ENCODE measurements at regions of chr15 and their contacts with region 1.

Region 1: DNA sequence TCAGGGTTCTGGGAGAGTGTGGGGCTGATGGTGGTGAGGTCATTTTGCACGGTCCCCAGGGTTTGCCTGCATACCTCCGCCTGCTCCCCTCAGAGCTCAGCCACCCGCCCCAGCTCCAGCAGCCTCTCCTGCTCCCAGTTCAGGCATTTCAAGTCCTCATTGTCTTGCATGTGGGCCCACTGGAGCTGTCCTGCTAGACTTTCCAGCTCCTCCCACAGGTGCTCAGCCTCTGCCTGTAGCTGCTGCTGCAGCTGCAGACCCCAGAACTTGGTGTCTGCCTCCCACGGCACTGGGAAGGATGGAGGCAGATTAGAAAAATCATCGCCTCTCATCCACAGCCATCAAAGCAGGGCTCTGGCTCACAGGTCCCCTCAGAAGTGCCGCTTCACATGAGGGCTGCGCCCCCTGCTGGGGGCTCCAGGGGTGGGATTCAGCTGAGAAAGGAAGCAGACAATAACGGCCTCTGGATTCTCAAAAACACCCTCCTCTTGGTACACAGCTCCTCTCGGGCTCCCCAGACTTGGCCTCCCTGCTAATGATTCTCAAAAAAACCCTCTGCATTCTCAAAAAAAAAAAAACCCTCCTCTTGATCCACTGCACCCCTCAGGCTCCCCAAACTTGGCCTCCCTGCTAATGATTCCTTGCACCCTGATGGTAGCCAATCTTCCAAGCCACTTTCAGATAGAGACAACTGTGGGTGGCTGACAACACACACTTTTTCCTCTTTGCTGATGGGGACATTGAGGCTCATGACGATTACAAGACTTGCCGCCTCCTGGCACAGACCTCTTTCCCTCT is 89.3 kb upstream of the C2CD4B start:
- DNase-seq: peak; percentile 43
- ATAC-seq: peak; percentile 81
- H3K4me3 ChIP-seq: no peak overlapping the region
- H3K27ac ChIP-seq: no peak overlapping the region
- H3K4me1 ChIP-seq: no peaks in the 10 kb centered on the region
- H3K27me3 ChIP-seq: peaks cover 22% of the 10 kb centered on the region
- CTCF ChIP-seq: peak; percentile 62
- POLR2A ChIP-seq: no peak
- RAD21 ChIP-seq: peak; percentile 56

Region 2: GRCh38 chr15:62060113-62060895 is 194.0 kb before region 1 on chr15 and contains the start of gene VPS13C:
- CTCF ChIA-PET with region 1: no interaction called
- POLR2A ChIA-PET with region 1: no interaction called
- dilution Hi-C with region 1: no loop called
- in situ Hi-C with region 1: no loop called
- intact Hi-C with region 1: loop called (anchors 10 kb)
- DNase-seq: peak; percentile 90
- ATAC-seq: peak; percentile 96
- H3K4me3 ChIP-seq: peak within 1 kb of the TSS; percentile 88
- H3K27ac ChIP-seq: peak within 1 kb of the TSS; percentile 58
- H3K4me1 ChIP-seq: no peaks in the 10 kb centered on the region
- H3K27me3 ChIP-seq: peaks cover 16% of the 10 kb centered on the region
- CTCF ChIP-seq: peak; percentile 84
- POLR2A ChIP-seq: peak; percentile 61; the same call in 1 of the 2 replicates
- RAD21 ChIP-seq: peak; percentile 47
- total RNA-seq, gene VPS13C: 32.8 and 48.6 TPM in 2 replicates

Region 3: GRCh38 chr15:62306851-62307504 is 52.6 kb after region 1 on chr15:
- CTCF ChIA-PET with region 1: no interaction called
- POLR2A ChIA-PET with region 1: no interaction called
- dilution Hi-C with region 1: no loop called
- in situ Hi-C with region 1: no loop called
- intact Hi-C with region 1: no loop called
- DNase-seq: peak; percentile 67
- ATAC-seq: peak; percentile 93
- H3K4me3 ChIP-seq: no peak overlapping the region
- H3K27ac ChIP-seq: no peak overlapping the region
- H3K4me1 ChIP-seq: no peaks in the 10 kb centered on the region
- H3K27me3 ChIP-seq: peaks cover 8% of the 10 kb centered on the region
- CTCF ChIP-seq: peak; percentile 62
- POLR2A ChIP-seq: no peak
- RAD21 ChIP-seq: peak; percentile 56

Measured in IMR-90 (cell line).